ENCODE measurements at regions of chr20 and their contacts with region 1.

Region 1: GRCh38 chr20:47392015-47392720 is 35.7 kb upstream of the ZMYND8 start:
- DNase-seq: peak; percentile 52
- CTCF ChIP-seq: no peak

Region 2: DNA sequence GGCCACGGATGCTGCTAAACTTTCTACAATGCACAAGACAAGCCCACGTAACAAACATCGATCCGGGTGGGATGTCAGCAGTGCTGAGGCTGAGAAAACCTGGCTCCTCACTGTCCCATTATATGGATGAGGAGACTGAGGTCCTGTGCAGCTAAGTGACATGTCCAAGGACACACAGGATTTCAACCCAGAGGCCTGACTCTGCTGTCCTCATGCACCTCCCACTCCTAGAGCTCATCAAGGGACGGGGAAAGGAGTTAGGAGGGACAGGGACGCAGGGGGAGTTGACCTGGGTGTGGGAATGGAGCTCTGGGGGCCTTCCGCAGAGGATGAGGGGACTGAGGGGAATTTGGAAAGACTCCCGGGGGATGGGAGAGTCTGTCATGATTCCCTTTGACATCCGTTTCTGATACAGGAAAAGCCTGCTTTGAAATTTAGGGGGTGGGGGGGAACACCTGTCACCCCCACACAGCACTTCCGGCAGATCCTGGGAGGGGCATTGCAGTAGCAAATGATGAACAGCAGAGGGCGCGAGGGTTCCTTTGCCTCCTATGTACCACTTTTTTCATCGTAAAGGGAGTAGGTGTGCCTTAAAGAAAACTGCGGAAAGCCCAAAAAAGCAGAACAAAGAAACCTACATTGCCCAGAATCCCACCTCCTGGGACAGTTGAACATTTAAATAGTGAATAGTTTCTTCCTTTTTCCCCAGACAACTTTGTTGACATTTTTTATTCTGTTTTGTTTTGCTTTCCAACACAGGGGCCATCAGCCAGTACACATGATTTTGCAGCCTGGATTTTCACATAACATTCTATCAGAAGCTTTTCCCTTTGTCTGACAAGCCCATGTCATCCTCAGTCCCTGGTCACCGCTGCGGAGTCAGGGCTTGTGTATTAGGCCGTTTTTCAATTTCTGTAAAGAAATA is 634.2 kb before region 1 on chr20:
- in situ Hi-C with region 1: loop called (anchors 25 kb)
- DNase-seq: peak; percentile 78
- CTCF ChIP-seq: peak; percentile 90

Region 3: GRCh38 chr20:47262365-47263013 is 129.7 kb before region 1 on chr20:
- in situ Hi-C with region 1: loop called (anchors 10 kb)
- DNase-seq: peak; percentile 65
- CTCF ChIP-seq: no peak

Region 4: GRCh38 chr20:47620808-47621805 is 228.9 kb after region 1 on chr20:
- in situ Hi-C with region 1: loop called (anchors 10 kb)
- DNase-seq: peak; percentile 27
- CTCF ChIP-seq: peak; percentile 62

Region 5: GRCh38 chr20:48047444-48047843 is 655.3 kb after region 1 on chr20:
- in situ Hi-C with region 1: no loop called
- DNase-seq: no peak
- CTCF ChIP-seq: no peak